HEK293 (cell line): ENCODE measurements at regions of chr19 and their contacts with region 1.

Region 1: GRCh38 chr19:35066691-35067563 is 25.4 kb downstream of the HPN start:
- H3K4me3 ChIP-seq: no peak overlapping the region
- H3K27ac ChIP-seq: no peak overlapping the region
- H3K4me1 ChIP-seq: peaks cover 10% of the 10 kb centered on the region
- CTCF ChIP-seq: peak; percentile 86

Region 2: DNA sequence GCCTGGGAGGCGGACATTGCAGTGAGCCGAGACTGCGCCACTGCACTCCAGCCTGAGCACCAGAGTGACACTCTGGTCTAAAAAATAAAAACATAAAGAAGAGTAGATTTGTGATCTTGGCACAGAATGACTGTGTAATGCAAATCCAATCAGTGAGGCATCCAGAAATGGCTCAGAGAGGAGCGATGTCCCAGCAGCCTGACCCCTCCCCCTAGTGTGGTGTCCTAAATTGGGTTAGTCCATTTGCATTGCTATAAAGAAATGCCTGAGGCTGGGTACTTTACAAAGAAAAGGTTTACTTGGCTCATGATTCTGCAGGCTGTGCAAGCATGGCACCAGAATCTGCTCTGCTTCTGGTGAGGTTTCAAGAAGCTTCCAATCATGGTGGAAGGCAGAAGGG is 199.3 kb before region 1 on chr19:
- CTCF ChIA-PET with region 1: no interaction called
- POLR2A ChIA-PET with region 1: no interaction called
- H3K4me3 ChIP-seq: no peak overlapping the region
- H3K27ac ChIP-seq: no peak overlapping the region
- H3K4me1 ChIP-seq: no peaks in the 10 kb centered on the region
- CTCF ChIP-seq: no peak

Region 3: GRCh38 chr19:34953092-34953491 is 113.8 kb before region 1 on chr19:
- CTCF ChIA-PET with region 1: no interaction called
- POLR2A ChIA-PET with region 1: no interaction called
- H3K4me3 ChIP-seq: no peak overlapping the region
- H3K27ac ChIP-seq: no peak overlapping the region
- H3K4me1 ChIP-seq: no peaks in the 10 kb centered on the region
- CTCF ChIP-seq: no peak

Region 4: GRCh38 chr19:34974646-34975045 is 92.3 kb before region 1 on chr19:
- CTCF ChIA-PET with region 1: interaction called, 12 read pairs
- POLR2A ChIA-PET with region 1: no interaction called
- H3K4me3 ChIP-seq: no peak overlapping the region
- H3K27ac ChIP-seq: no peak overlapping the region
- H3K4me1 ChIP-seq: no peaks in the 10 kb centered on the region; the same call in 1 of the 2 replicates
- CTCF ChIP-seq: no peak

Region 5: DNA sequence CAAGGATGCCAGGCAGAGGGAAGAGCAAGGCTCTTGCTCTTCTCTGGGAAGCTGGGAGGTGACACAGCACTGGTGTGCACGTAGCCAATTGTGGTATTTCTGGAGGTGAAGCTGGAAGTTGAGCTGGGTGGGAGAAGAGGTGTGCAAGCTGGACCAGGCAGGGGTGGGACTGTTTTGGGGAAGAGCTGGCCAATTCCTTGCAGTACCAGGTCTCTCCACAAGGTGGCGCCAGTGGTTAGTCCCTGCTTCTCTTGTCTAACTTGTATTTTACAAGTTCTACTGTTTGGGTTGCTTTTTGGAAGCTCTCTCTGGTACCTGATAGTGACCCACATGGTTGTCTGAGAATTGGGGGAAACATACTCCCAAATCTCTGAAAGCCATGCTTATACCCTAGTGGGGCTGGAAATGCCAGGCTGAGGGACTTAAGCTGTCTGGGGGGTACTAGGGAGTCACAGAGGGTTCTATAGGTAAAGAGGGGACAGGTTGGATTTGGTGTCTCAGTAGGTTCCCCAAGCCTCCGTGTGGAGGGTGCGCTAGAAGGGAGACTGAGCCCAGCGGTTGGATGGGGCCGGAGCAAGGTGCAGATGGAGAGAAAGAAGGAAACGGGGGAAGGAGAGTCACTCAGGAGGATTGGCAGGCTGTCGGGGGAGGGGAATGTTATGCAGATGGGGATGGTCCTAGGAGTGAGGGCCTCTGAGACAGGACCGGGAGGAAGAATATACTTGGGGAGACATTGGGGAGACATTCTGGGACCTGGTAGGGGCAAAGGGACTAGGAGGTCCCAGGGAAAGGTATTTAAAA is 22.4 kb before region 1 on chr19:
- CTCF ChIA-PET with region 1: interaction called, 101 read pairs
- POLR2A ChIA-PET with region 1: no interaction called
- H3K4me3 ChIP-seq: no peak overlapping the region
- H3K27ac ChIP-seq: no peak overlapping the region
- H3K4me1 ChIP-seq: peaks cover 5% of the 10 kb centered on the region; the same call in 1 of the 2 replicates
- CTCF ChIP-seq: peak; percentile 100

Region 6: DNA sequence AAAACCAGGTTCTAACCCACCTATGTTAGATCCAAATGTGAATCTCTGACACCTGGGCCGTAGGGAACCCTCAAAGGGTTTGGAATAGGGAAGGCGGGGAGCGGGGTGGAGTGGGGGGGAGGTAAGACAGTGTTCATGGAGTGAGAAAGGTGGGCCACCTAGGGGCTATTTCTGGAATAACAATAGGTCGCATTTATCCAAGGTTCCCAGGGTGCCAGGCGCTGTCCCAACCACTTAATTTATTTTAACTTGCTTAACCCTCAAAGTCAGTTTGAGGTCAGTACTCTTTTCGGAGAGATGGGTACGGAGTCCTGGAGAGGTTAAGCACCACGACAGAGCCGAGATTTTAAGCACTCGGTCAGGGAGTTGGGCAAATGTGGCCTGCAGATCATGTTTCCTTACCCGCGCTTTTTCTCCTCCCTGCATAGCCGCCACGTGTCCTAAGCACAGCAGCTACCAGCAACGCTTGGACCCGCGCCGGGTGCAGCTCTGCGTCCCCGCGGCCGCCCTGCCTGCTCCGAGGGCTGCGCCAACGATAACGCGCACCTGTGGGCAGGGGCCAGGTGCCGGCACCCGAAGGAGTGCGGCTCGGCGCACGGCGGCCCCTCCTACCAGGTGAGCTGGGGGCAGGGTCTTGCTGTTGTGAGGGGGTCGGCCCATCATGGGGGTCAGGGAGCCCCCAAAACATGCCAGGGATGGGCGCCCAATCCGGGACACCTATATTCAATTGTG is 23.7 kb after region 1 on chr19:
- CTCF ChIA-PET with region 1: interaction called, 87 read pairs
- POLR2A ChIA-PET with region 1: interaction called, 3 read pairs
- H3K4me3 ChIP-seq: no peak overlapping the region
- H3K27ac ChIP-seq: no peak overlapping the region; the same call in 1 of the 2 replicates
- H3K4me1 ChIP-seq: peaks cover 7% of the 10 kb centered on the region
- CTCF ChIP-seq: peak; percentile 86

Region 7: DNA sequence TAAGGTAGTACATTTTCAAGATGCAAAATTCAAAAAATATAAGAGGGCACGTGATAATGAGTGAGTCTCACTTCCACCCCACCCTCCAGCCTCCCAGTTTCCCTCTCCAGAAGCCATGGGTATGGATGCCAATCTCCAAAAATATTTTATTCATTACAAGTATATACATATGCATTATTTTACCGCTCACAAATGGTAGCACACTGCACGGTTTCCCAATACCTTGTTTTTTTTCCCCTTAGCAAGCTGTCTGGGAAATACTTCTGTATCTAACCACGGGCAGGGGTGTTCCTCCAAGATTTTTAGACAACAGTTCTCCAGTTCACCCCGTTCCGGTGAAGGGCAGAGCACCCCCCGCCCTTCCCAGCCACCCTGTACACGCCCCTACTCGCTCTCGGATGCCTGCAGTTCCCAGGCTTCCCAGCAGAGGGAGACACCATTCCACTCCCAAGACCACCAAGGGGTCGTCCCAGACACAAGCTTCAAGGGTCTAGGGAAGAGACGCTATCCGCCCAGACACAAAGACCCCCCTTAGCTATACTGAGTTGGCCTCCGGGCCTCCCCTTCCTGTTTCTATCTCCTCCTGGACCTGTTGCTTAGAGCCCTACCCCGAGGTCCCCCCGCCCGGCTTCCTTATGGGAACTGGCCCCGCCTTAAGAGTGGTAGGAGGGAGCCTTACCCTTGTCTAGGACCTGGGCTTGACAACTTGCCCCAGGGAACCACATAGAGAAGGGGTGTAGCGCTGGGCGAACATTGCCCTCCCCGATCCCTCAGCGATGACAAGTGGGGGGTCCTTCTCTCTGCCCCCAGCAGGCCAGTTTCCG is 47.6 kb after region 1 on chr19:
- CTCF ChIA-PET with region 1: interaction called, 30 read pairs
- POLR2A ChIA-PET with region 1: interaction called, 4 read pairs
- H3K4me3 ChIP-seq: peak overlapping the region; percentile 7
- H3K27ac ChIP-seq: no peak overlapping the region
- H3K4me1 ChIP-seq: peaks cover 2% of the 10 kb centered on the region; the same call in 1 of the 2 replicates
- CTCF ChIP-seq: peak; percentile 98

Region 8: GRCh38 chr19:35162471-35163326 is 95.8 kb after region 1 on chr19:
- CTCF ChIA-PET with region 1: interaction called, 12 read pairs
- POLR2A ChIA-PET with region 1: no interaction called
- H3K4me3 ChIP-seq: no peak overlapping the region
- H3K27ac ChIP-seq: no peak overlapping the region
- H3K4me1 ChIP-seq: no peaks in the 10 kb centered on the region
- CTCF ChIP-seq: no peak